Mammary epithelial cell (primary cell): ENCODE measurements at regions of chr14 and their contacts with region 1.

Region 1: GRCh38 chr14:34030864-34031263 is 80.0 kb upstream of the EGLN3 start:
- DNase-seq: peak; percentile 45
- H3K4me3 ChIP-seq: no peak overlapping the region
- H3K27ac ChIP-seq: no peak overlapping the region
- H3K4me1 ChIP-seq: peaks cover 14% of the 10 kb centered on the region
- H3K27me3 ChIP-seq: no peaks in the 10 kb centered on the region
- CTCF ChIP-seq: no peak

Region 2: DNA sequence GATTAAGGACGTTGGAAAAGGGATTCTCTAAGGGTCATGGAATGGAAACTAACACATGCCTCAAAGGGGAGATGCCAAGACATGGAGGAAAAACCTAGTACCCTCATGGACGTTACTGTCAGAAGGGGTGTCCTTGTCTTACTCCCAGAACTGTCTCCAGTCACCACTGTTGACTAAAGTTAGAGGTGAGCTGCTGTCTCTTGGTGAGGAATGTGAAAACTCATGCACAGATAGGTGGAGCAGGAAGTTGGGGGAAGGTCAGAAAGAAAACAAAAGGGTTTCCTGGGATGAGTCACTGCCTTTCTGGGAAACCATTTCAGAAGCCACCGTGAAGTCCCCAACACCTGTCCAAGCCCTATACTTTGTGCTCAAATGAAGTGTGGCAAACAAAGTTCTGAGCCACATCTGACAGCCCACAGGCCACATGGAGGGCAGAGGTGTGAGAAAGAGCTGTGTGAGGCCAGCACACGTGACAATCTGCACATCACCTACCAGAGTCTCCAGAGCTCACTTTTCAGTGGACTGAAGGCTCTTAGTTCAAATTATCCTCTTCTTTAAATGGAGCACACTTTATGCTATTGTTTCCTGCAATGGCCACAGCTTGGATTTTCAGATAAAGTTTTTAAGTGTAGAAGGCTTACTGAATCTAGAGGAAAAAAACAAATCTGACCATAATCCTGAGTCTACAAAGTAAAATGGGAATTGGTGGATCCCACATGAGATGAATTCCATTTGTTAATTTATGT is 12.9 kb after region 1 on chr14:
- CTCF ChIA-PET with region 1: interaction called, 3 read pairs
- dilution Hi-C with region 1: no loop called
- in situ Hi-C with region 1: no loop called
- intact Hi-C with region 1: loop called (anchors 1 kb)
- DNase-seq: peak; percentile 77
- H3K4me3 ChIP-seq: no peak overlapping the region
- H3K27ac ChIP-seq: peak overlapping the region; percentile 59
- H3K4me1 ChIP-seq: peaks cover 30% of the 10 kb centered on the region
- H3K27me3 ChIP-seq: no peaks in the 10 kb centered on the region
- CTCF ChIP-seq: no peak

Region 3: DNA sequence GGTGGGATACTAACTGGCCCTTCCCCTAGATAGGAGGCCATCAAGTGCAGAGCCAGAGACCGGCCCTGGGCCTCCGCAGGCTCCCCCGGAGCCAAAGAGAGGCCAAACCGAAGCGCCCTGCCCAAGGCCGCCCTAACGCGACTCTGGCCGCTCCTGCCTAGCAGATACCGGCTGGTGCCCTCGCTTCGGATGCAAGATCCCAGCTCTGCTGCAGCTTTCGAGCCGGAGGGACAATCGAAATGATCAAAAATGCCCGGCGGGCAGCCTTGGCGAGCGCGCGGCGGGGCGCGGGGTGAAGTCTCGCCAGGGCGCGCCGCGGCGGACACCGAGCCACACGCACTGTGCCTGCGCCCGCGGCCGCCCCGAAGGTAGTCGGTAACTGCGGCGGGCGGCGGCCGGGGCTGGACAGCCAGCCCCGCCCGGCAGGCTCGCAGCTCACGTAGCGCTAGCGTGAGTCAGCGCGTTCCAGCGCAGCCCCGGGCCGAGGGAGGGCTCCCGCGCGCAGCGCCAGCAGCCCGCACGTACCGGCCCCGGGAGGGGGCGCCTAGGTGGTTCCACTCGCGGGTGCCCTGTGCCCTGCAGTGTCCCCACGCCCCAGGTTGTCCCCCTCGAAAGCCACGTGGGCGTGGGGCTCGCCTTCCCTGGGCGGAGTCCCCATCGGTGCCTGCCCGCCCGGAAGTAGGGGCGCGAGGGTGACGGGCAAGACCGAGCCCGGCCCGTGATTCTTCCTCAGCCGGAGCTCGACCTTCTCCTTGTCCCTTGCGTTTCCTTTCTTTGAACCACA is 29.2 kb after region 1 on chr14:
- CTCF ChIA-PET with region 1: interaction called, 4 read pairs
- dilution Hi-C with region 1: loop called (anchors 5 kb)
- in situ Hi-C with region 1: no loop called
- intact Hi-C with region 1: loop called (anchors 1 kb)
- DNase-seq: peak; percentile 71
- H3K4me3 ChIP-seq: peak overlapping the region; percentile 48 to 61 (median 48)
- H3K27ac ChIP-seq: peak overlapping the region; percentile 73
- H3K4me1 ChIP-seq: peaks cover 32% of the 10 kb centered on the region
- H3K27me3 ChIP-seq: no peaks in the 10 kb centered on the region
- CTCF ChIP-seq: peak in 1 of 2 donors; percentile 47

Region 4: GRCh38 chr14:34069854-34070582 is 39.2 kb after region 1 on chr14:
- CTCF ChIA-PET with region 1: no interaction called
- dilution Hi-C with region 1: loop called (anchors 5 kb)
- in situ Hi-C with region 1: no loop called
- intact Hi-C with region 1: no loop called
- DNase-seq: no peak
- H3K4me3 ChIP-seq: no peak overlapping the region
- H3K27ac ChIP-seq: no peak overlapping the region
- H3K4me1 ChIP-seq: no peaks in the 10 kb centered on the region
- H3K27me3 ChIP-seq: no peaks in the 10 kb centered on the region
- CTCF ChIP-seq: no peak

Region 5: GRCh38 chr14:34270361-34270760 is 239.5 kb after region 1 on chr14:
- CTCF ChIA-PET with region 1: no interaction called
- dilution Hi-C with region 1: no loop called
- in situ Hi-C with region 1: no loop called
- intact Hi-C with region 1: no loop called
- DNase-seq: no peak
- H3K4me3 ChIP-seq: no peak overlapping the region
- H3K27ac ChIP-seq: no peak overlapping the region
- H3K4me1 ChIP-seq: no peaks in the 10 kb centered on the region
- H3K27me3 ChIP-seq: no peaks in the 10 kb centered on the region
- CTCF ChIP-seq: no peak